ENCODE measurements at regions of chr12 and their contacts with region 1.

Region 1: DNA sequence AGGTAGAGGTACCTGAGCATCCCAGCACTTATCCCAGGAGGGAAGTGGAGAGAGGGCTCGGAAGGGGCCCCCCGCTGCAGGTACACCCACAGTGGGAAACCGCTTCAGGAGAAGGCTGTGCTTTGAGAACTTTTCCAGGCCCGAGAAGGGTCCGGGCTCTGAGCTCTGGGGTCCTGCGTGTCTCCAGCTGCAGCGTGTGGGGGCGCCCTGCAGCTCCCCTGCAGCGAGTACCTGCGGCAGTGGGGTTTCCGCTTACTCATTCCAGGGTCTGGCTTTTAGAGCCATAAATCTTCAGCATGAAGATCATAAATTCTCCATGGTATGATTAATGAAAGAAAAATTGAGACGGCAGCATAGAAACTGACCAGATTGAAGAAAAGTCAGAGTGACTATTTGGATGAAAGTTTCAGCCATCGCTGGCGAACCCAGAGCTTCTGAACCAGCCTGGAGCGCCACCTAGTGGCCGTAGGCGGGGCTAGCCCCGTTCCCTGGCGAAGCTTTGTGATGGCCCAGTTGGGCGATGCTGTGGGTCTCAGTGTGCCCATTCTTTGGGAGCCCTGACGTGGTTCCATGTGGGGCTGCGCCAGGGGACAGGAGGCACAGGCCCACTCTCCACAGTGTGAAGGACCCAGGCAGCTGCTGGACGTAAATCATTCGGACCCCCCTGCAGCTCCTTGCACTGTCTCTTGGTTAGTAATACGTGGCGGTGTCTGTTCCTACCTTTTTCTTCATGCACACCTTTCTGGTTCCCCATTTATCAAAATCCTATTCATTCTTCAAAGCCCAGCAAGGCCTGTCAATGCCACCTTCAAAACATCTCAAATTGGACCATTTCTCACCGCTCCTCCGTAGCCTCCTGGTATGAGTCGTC is 198.2 kb downstream of the TSPAN9 start:
- DNase-seq: peak; percentile 77
- H3K4me3 ChIP-seq: no peak overlapping the region
- H3K27ac ChIP-seq: no peak overlapping the region
- H3K4me1 ChIP-seq: no peaks in the 10 kb centered on the region
- H3K27me3 ChIP-seq: no peaks in the 10 kb centered on the region
- CTCF ChIP-seq: peak; percentile 96

Region 2: DNA sequence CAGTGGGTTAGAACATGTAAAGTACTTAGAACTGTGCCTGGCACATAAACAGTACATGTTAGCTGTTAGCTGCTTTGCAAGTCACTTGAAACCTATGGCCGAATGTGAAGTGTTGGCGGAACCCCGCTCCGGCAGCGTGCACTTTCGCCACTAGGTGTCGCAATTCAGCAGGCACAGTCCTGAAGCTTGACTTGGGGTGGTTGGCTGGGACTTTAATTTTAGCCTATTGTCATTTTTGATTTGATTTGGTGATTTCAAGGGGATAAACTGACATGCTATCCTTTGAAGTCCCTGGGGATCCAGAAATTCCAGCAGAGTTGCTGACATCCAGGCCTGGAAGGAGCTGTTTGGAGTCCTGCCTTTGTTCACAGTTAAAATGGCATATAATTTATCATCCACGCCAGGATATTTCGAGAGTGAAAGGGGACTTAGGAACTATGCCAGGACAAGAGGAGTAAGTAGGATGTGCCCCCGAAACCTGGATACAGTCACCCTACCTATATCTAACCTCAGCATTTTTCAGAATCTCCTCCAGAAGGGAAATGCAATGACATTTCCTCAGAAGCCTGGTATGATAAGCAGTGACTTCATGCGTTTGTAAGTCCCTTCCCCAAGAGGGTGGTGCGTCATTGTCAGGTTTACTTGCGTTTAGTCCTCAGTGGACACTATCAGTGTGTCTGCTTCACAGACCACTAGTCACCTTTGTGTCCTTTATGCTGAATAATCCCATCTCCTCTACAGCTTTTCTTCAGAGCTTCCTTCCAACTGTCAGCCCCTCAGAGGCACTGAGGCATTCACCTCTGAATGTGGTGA is 201.8 kb before region 1 on chr12:
- CTCF ChIA-PET with region 1: interaction called, 22 read pairs
- POLR2A ChIA-PET with region 1: no interaction called
- intact Hi-C with region 1: loop called (anchors 1 kb)
- DNase-seq: peak; percentile 91
- H3K4me3 ChIP-seq: no peak overlapping the region
- H3K27ac ChIP-seq: no peak overlapping the region
- H3K4me1 ChIP-seq: peaks cover 13% of the 10 kb centered on the region
- H3K27me3 ChIP-seq: no peaks in the 10 kb centered on the region
- CTCF ChIP-seq: peak; percentile 99

Region 3: DNA sequence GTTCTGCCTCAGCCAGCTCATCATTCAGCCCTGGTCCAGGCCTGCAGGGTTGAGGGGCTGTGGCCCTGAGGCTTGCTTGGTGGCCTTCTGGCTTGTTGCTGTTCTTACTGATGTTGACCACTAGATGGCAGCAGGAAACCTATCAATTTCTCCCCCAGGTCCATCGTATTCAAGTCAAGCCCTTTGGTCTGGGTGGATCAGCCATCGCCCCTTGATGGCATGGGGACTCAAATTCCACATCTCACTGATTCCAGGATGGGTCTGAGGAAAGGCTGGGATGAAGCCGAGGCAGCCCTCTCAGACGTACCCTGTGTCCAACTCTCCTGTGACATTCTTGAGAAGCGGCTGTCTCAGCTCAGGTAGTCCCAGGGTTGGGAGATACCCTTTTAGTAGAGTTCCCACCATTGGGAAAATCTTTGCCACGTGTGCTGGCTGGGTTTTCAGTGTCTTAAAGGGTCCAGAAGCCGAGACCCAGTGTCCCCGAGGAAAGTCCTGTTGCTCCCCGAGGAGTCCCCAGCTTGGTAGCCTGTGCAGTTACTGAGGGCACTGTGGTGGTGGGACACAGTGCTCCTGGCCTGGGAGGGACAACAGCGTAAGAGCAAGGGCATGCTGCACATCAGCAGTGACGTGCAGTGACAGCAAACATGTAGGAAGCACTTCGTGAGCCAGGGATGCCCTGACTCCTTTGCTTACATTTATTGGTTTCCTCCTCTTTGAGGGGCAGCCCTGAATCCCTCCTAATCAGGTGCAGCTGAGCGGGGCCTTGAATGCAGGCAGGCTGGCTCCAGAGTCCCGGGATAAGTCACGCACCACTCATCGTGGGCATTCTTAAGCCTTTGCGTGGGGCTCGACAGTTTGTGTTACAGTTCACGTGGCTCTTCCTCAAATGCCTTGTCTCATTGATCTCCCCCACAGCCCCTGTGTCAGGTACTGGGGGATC is 139.6 kb before region 1 on chr12:
- CTCF ChIA-PET with region 1: interaction called, 21 read pairs
- POLR2A ChIA-PET with region 1: no interaction called
- intact Hi-C with region 1: loop called (anchors 1 kb)
- DNase-seq: peak; percentile 74
- H3K4me3 ChIP-seq: no peak overlapping the region
- H3K27ac ChIP-seq: no peak overlapping the region
- H3K4me1 ChIP-seq: peaks cover 42% of the 10 kb centered on the region
- H3K27me3 ChIP-seq: no peaks in the 10 kb centered on the region
- CTCF ChIP-seq: peak; percentile 82